HEK293 (cell line): ENCODE measurements at regions of chr7 and their contacts with region 1.

Region 1: DNA sequence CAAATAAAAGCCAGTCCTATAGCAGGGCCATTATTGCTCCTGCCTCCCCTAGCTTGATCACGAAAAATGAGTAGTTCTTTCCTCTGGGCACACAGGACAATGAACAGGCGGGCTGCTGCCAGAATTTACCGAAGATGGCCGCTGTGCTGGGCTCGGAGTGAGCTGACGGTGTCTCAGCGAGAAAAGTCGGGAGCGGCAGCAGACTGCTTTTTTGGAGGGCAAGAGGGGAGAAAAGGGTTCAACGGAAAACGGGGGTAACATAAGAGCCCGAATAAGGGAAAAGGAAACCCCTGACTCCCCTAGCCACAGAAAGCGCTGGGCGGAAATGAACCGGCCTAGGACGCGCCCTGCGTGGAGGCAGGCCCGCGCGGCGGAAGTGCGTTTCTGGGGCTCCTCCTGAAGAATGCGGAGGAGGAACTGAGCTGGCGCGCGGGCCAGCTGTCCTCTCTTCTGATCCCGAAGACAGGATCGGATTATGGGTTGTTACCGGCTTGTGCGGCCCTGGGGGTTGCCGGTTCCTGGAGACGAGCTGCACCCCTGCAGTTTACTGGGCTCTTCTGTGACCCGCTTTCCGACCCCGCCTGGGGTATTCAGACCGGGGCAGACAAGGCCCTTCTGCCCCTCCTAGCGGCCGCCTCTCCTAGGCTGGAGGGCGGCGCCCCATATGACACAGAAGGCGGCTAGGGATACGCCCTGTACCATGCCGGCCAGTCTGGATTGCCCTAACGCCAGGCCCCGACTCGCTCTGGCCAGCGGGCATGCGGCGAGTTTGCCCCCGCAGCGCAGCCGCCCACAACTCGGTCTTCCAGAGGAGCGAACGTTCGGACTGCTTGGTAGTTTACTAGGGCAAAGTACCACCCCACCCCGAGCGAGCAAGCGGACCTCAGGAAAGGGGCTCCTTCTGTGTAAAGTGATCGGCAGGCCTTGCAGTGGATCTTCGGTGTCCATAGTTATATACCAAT is 30.1 kb upstream of the KMT2E start:
- H3K4me3 ChIP-seq: peak overlapping the region; percentile 74
- H3K27ac ChIP-seq: peak overlapping the region; percentile 84
- H3K4me1 ChIP-seq: peaks cover 43% of the 10 kb centered on the region
- CTCF ChIP-seq: peak; percentile 88

Region 2: GRCh38 chr7:104931181-104931781 is 52.6 kb before region 1 on chr7:
- CTCF ChIA-PET with region 1: interaction called, 19 read pairs
- POLR2A ChIA-PET with region 1: no interaction called
- H3K4me3 ChIP-seq: no peak overlapping the region
- H3K27ac ChIP-seq: no peak overlapping the region
- H3K4me1 ChIP-seq: 0 out of 2 replicates have a peak, but pooled peaks cover 2% of the 10 kb centered on the region
- CTCF ChIP-seq: no peak

Region 3: DNA sequence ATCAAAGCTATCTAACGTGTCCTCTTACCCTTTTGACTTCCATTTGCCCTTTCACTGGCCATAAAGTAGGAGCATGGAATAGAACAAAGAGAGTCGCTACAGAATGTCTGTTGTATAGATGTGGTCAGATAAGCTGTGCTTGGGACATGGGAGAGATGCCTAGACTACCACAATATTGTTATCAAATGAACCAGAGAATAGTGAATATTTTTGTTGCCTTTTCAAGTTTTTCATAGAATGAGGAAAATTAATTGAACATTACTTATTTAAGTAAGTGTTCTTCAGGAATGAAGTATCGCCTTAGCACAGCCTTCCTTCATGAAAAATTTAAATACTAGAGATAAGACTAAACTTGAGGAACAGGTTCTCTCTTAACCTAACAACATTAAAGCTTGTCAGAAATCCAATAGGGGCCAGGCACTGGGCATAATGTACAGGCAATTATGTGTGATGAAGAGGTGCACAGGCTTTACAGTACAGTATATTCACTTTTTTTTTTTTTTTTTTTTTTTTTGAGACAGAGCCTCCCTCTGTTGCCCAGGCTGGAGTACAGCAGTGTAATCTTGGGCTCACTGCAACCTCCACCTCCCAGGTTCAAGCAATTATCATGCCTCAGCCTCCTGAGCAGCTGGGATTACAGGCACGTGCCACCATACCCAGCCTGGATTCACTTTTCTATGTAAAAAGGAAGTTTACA is 22.7 kb after region 1 on chr7:
- CTCF ChIA-PET with region 1: interaction called, 28 read pairs
- POLR2A ChIA-PET with region 1: interaction called, 92 read pairs
- H3K4me3 ChIP-seq: no peak overlapping the region
- H3K27ac ChIP-seq: no peak overlapping the region
- H3K4me1 ChIP-seq: peaks cover 13% of the 10 kb centered on the region; the same call in 1 of the 2 replicates
- CTCF ChIP-seq: no peak

Region 4: DNA sequence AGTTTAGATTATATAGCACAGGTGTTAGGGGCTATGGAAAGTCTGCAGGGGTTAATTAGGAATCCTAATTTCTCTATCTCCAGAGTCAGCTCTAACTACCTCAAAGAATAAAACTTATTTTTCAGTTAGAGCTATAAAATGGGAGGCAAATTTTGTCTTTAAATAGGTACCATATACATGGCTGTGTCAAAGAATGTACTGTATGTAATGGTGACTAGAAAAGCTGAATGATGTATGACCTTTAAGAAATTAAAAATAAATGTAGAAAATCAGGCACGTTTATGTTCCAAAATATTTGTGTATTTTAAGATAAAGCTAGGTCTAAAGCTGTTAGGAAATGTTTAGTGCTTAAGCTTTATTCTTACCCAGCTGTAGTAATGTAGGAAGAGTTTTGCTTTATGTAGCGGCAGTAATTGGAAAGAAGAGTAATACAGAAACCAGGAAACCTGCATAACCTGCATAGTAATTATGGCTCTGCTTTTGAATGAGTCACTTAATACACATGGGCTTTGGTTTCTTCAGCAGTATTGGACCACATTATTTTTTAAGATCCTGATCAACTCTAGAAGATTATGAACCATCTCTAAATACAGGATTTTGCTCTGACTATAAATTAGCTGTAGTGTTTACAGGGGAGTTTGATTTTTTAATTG is 115.1 kb after region 1 on chr7:
- CTCF ChIA-PET with region 1: interaction called, 6 read pairs
- POLR2A ChIA-PET with region 1: interaction called, 10 read pairs
- H3K4me3 ChIP-seq: no peak overlapping the region
- H3K27ac ChIP-seq: no peak overlapping the region
- H3K4me1 ChIP-seq: peaks cover 6% of the 10 kb centered on the region; the same call in 1 of the 2 replicates
- CTCF ChIP-seq: no peak